Mammary epithelial cell (primary cell): ENCODE measurements at regions of chr4 and their contacts with region 1.

Region 1: DNA sequence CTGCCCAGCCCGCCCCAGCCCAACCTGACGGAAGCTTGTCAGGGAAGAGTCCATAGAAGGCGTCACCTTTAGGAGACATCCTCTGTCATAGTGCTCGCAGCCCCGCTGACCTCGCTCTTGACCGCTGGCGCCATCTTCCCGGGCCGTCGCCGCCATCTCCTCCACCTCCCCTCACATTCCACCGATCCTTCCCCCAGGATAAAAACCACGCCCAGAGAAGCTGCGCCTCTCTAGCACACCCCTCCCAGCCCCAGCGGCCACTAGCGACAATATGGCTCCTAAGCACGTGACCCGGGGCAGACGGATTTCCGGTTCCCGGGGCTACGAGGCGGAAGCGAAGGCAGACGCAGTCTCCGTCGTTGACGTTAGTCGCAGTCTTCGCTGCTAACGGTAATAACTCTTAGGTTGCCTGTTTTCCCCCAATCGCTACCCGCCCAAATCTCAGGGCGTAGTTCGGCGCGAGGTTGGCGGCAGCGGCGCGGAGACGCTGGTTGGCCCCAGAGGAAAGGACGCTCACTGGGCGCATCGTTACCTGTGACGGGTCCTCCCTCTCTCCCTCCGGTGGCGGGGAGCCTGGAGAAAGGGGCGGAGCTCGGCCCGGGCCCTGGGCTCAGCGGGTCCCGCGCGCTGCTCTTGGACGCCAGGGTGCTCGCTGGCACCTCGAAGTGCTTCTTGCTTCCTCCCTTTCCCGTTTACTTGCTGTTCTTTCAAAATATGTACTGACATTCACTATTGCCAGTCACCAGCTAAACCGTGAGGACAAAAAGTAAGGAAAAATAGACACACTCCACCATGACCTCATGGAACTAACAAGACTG is at the starts of genes RCHY1 and THAP6:
- DNase-seq: peak; percentile 97
- H3K4me3 ChIP-seq: peak within 1 kb of the TSS; percentile 62 to 93 (median 87)
- H3K27ac ChIP-seq: peak within 1 kb of the TSS; percentile 94
- H3K4me1 ChIP-seq: peaks cover 23% of the 10 kb centered on the region
- H3K27me3 ChIP-seq: no peaks in the 10 kb centered on the region
- CTCF ChIP-seq: peak in 1 of 2 donors; percentile 13
- total RNA-seq, gene RCHY1: 25.1 to 35.5 TPM
- total RNA-seq, gene THAP6: 14.0 to 19.5 TPM

Region 2: GRCh38 chr4:75542824-75543223 is 28.5 kb after region 1 on chr4:
- CTCF ChIA-PET with region 1: no interaction called
- dilution Hi-C with region 1: no loop called
- in situ Hi-C with region 1: no loop called
- intact Hi-C with region 1: loop called (anchors 1 kb)
- DNase-seq: peak; percentile 99
- H3K4me3 ChIP-seq: no peak overlapping the region
- H3K27ac ChIP-seq: no peak overlapping the region
- H3K4me1 ChIP-seq: peaks cover 16% of the 10 kb centered on the region
- H3K27me3 ChIP-seq: no peaks in the 10 kb centered on the region
- CTCF ChIP-seq: no peak

Region 3: GRCh38 chr4:75555294-75556164 is 41.2 kb after region 1 on chr4 and contains the start of gene ODAPH:
- CTCF ChIA-PET with region 1: no interaction called
- dilution Hi-C with region 1: no loop called
- in situ Hi-C with region 1: no loop called
- intact Hi-C with region 1: loop called (anchors 5 kb)
- DNase-seq: peak; percentile 90
- H3K4me3 ChIP-seq: peak within 1 kb of the TSS in 2 of 3 experiments; percentile 11 to 33
- H3K27ac ChIP-seq: peak within 1 kb of the TSS; percentile 30
- H3K4me1 ChIP-seq: peaks cover 17% of the 10 kb centered on the region
- H3K27me3 ChIP-seq: no peaks in the 10 kb centered on the region
- CTCF ChIP-seq: peak; percentile 24 to 29
- total RNA-seq, gene ODAPH: not detected

Region 4: GRCh38 chr4:75924309-75924827 is 410.0 kb after region 1 on chr4:
- CTCF ChIA-PET with region 1: no interaction called
- dilution Hi-C with region 1: no loop called
- in situ Hi-C with region 1: no loop called
- intact Hi-C with region 1: no loop called
- DNase-seq: no peak
- H3K4me3 ChIP-seq: no peak overlapping the region
- H3K27ac ChIP-seq: no peak overlapping the region
- H3K4me1 ChIP-seq: no peaks in the 10 kb centered on the region
- H3K27me3 ChIP-seq: no peaks in the 10 kb centered on the region
- CTCF ChIP-seq: no peak